CD8-positive, alpha-beta T cell (primary cell): ENCODE measurements at regions of chr4 and their contacts with region 1.

Region 1: GRCh38 chr4:55345980-55346850 is at the start of gene SRD5A3:
- DNase-seq: peak; percentile 57 to 89 (median 81)
- ATAC-seq: peak; percentile 85
- H3K4me3 ChIP-seq: peak within 1 kb of the TSS; percentile 68 to 88
- H3K4me3 Mint-ChIP-seq: peak within 1 kb of the TSS; percentile 86
- H3K27ac ChIP-seq: peak within 1 kb of the TSS; percentile 64 to 81
- H3K27ac Mint-ChIP-seq: peak within 1 kb of the TSS; percentile 85
- H3K4me1 ChIP-seq: peaks cover 9% of the 10 kb centered on the region
- H3K4me1 Mint-ChIP-seq: peaks cover 14% of the 10 kb centered on the region
- H3K27me3 ChIP-seq: no peaks in the 10 kb centered on the region
- H3K27me3 Mint-ChIP-seq: no peaks in the 10 kb centered on the region
- CTCF ChIP-seq: peak; percentile 97
- total RNA-seq, gene SRD5A3: 1.1 TPM

Region 2: GRCh38 chr4:55312489-55313101 is 33.6 kb before region 1 on chr4:
- CTCF ChIA-PET with region 1: interaction called, 10 read pairs
- POLR2A ChIA-PET with region 1: no interaction called
- intact Hi-C with region 1: no loop called
- DNase-seq: peak in 6 of 9 experiments; percentile 5 to 64 (median 33)
- ATAC-seq: peak; percentile 54
- H3K4me3 ChIP-seq: no peak overlapping the region
- H3K4me3 Mint-ChIP-seq: no peak overlapping the region
- H3K27ac ChIP-seq: no peak overlapping the region
- H3K27ac Mint-ChIP-seq: no peak overlapping the region
- H3K4me1 ChIP-seq: no peaks in the 10 kb centered on the region
- H3K4me1 Mint-ChIP-seq: no peaks in the 10 kb centered on the region
- H3K27me3 ChIP-seq: no peaks in the 10 kb centered on the region
- H3K27me3 Mint-ChIP-seq: peaks cover 3% of the 10 kb centered on the region
- CTCF ChIP-seq: peak; percentile 63

Region 3: DNA sequence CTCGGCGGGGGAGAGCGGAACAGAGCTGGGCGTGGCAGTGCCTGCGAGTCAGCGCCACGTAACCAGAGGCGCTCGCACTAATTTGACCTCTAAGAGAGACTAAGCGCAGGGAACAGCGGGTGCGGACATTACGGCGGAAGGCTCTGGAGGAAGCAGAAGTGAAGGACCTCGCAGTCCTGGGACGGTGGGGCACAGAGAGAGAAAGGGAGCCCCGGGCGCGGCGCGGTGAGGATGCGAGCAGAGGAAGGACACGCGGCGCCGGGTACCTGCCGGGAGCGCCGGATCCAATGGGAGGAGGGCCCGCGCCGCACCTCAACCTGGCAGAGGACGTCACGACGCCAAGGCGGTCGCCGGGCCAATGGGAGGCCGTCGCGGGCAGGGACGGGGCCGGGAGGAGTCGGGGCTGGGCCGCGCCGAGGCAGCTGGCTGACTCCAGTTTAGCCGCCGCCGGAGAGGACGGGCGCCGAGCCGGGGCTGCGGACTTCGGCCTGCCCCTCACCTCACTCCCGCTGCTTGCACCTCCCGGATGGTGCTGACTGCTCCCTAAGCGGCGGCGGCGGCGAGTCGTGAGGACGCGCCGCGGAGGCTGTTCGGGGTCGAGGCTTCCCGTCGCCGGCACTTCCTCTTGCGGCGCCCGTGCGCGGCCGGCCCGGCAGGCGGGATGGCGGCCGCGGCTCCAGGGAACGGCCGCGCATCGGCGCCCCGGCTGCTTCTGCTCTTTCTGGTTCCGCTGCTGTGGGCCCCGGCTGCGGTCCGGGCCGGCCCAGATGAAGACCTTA is 49.5 kb after region 1 on chr4 and contains the start of gene TMEM165:
- CTCF ChIA-PET with region 1: interaction called, 7 read pairs
- POLR2A ChIA-PET with region 1: interaction called, 9 read pairs
- intact Hi-C with region 1: loop called (anchors 1 to 2 kb)
- DNase-seq: peak; percentile 72 to 93 (median 86)
- ATAC-seq: peak; percentile 94
- H3K4me3 ChIP-seq: peak within 1 kb of the TSS; percentile 68 to 74
- H3K4me3 Mint-ChIP-seq: peak within 1 kb of the TSS; percentile 97
- H3K27ac ChIP-seq: peak within 1 kb of the TSS; percentile 83 to 93
- H3K27ac Mint-ChIP-seq: peak within 1 kb of the TSS; percentile 98
- H3K4me1 ChIP-seq: peaks cover 36% of the 10 kb centered on the region
- H3K4me1 Mint-ChIP-seq: peaks cover 38% of the 10 kb centered on the region
- H3K27me3 ChIP-seq: no peaks in the 10 kb centered on the region
- H3K27me3 Mint-ChIP-seq: no peaks in the 10 kb centered on the region
- CTCF ChIP-seq: peak; percentile 0
- total RNA-seq, gene TMEM165: 31.0 to 31.5 TPM

Region 4: DNA sequence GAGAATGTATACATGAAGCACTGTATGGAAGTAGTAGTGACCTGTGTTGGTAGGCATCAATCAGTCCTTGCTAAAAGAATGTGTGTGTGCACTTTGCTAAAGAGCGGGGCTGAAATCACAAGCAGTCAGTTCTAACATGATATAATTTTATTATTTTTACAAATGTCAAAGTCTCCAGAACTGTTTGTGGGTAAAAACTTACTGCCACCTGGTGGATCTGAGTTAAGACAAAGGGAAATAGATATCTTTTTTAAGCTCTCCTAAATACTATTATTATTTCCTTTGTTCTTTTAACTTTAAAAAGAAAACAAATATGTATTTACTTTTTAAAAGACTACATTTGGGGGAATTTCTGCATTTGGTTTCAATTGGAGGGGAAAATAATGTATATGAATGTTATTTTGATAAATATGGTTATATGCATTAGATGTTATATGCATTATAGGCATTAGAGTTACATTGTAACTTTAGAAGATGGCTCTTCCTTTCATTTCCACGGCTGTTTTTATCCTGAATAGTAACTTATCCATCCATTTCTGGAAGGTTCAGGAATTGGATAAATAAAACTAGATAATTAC is 208.3 kb after region 1 on chr4:
- CTCF ChIA-PET with region 1: interaction called, 12 read pairs
- POLR2A ChIA-PET with region 1: no interaction called
- intact Hi-C with region 1: loop called (anchors 1 to 2 kb)
- DNase-seq: peak in 2 of 9 experiments; percentile 54 to 67
- ATAC-seq: peak; percentile 60
- H3K4me3 ChIP-seq: no peak overlapping the region
- H3K4me3 Mint-ChIP-seq: no peak overlapping the region
- H3K27ac ChIP-seq: no peak overlapping the region
- H3K27ac Mint-ChIP-seq: no peak overlapping the region
- H3K4me1 ChIP-seq: no peaks in the 10 kb centered on the region
- H3K4me1 Mint-ChIP-seq: peaks cover 7% of the 10 kb centered on the region
- H3K27me3 ChIP-seq: no peaks in the 10 kb centered on the region
- H3K27me3 Mint-ChIP-seq: peaks cover 24% of the 10 kb centered on the region
- CTCF ChIP-seq: peak; percentile 67

Region 5: DNA sequence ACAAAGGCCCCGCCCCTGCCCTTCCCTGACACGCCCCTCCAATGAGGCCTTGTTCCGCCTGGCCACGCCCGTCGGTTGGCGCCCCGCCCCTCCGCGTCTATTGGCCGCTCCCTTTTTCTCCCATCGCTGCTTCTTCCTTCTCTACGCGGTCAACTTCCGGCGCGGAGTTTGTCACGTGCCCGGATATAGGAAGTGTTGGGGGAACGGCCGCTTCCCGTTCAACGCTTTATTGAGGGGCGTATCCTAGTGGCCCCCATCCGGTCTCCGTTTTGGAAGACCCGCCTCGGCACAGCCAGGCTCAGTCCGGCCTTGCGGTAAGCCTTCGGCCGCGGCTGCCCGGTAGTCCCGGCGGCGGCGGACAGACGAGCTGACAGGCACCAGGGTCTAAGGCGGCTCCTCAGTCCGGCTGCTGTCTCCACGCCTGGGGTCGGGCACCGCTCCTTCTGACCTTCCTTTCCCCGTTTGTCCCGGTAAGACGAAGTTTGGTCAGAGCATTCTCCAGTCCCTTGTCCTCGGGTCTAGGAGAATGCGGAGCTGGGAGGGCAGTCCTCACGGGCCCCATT is 507.4 kb after region 1 on chr4 and contains the start of gene EXOC1:
- CTCF ChIA-PET with region 1: no interaction called
- POLR2A ChIA-PET with region 1: no interaction called
- intact Hi-C with region 1: loop called (anchors 5 kb)
- DNase-seq: peak; percentile 90 to 98 (median 97)
- ATAC-seq: peak; percentile 96
- H3K4me3 ChIP-seq: peak within 1 kb of the TSS; percentile 96
- H3K4me3 Mint-ChIP-seq: peak within 1 kb of the TSS; percentile 36
- H3K27ac ChIP-seq: peak within 1 kb of the TSS; percentile 70 to 86
- H3K27ac Mint-ChIP-seq: peak within 1 kb of the TSS; percentile 64
- H3K4me1 ChIP-seq: peaks cover 40% of the 10 kb centered on the region
- H3K4me1 Mint-ChIP-seq: peaks cover 38% of the 10 kb centered on the region
- H3K27me3 ChIP-seq: no peaks in the 10 kb centered on the region
- H3K27me3 Mint-ChIP-seq: no peaks in the 10 kb centered on the region
- CTCF ChIP-seq: no peak
- total RNA-seq, gene EXOC1: 12.1 to 14.5 TPM